Keratinocyte (primary cell): ENCODE measurements at regions of chr15 and their contacts with region 1.

Region 1: GRCh38 chr15:36932070-36932469 is 168.3 kb downstream of the MEIS2 start:
- DNase-seq: no peak
- H3K4me3 ChIP-seq: no peak overlapping the region
- H3K27ac ChIP-seq: no peak overlapping the region
- H3K4me1 ChIP-seq: no peaks in the 10 kb centered on the region
- H3K27me3 ChIP-seq: no peaks in the 10 kb centered on the region
- CTCF ChIP-seq: no peak

Region 2: DNA sequence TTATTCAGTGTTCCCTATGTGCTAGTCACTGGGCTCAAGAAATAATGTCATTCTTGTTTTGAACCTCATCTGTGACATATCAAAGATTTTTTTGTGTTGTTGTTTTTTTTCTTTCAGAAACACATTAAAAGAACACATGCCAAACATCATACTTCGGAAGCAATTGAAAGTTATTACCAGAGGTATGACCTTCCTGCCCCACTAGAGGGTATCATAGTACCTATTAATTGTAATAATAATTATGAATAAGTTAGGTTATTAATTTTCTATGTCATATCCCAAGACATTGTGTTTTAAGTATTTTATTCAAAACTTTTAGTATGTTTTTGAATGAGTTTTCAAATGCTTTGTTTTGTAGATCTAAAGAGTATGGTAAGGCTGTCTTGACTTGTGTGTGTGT is 287.0 kb before region 1 on chr15:
- dilution Hi-C with region 1: no loop called
- DNase-seq: no peak
- H3K4me3 ChIP-seq: no peak overlapping the region
- H3K27ac ChIP-seq: no peak overlapping the region
- H3K4me1 ChIP-seq: peaks cover 6% of the 10 kb centered on the region
- H3K27me3 ChIP-seq: no peaks in the 10 kb centered on the region
- CTCF ChIP-seq: peak in 1 of 3 experiments; percentile 12

Region 3: GRCh38 chr15:36707884-36708435 is 224.1 kb before region 1 on chr15:
- dilution Hi-C with region 1: no loop called
- DNase-seq: no peak
- H3K4me3 ChIP-seq: no peak overlapping the region
- H3K27ac ChIP-seq: no peak overlapping the region
- H3K4me1 ChIP-seq: no peaks in the 10 kb centered on the region
- H3K27me3 ChIP-seq: no peaks in the 10 kb centered on the region
- CTCF ChIP-seq: no peak

Region 4: GRCh38 chr15:36970522-36970921 is 38.5 kb after region 1 on chr15:
- dilution Hi-C with region 1: loop called (anchors 5 kb)
- DNase-seq: no peak
- H3K4me3 ChIP-seq: no peak overlapping the region
- H3K27ac ChIP-seq: no peak overlapping the region
- H3K4me1 ChIP-seq: no peaks in the 10 kb centered on the region
- H3K27me3 ChIP-seq: no peaks in the 10 kb centered on the region
- CTCF ChIP-seq: no peak

Region 5: DNA sequence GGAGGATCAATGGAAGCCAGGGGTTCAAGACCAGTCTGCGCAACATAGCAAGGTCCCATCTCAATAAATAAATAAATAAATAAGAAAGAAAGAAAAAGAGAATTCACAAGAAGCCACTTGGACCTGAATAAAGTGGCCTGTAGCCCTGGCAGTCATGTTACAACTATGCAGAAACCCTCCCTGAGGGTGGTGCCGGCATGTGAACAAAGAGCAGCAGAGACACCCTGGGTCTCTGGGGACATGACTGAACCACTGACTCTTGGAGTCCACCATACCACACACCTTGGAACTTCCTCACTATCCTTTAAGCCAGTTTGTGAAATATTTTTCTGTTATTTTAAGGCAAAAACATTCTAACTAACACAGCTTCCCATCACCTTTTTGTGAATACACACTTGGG is 75.2 kb after region 1 on chr15:
- dilution Hi-C with region 1: no loop called
- DNase-seq: no peak
- H3K4me3 ChIP-seq: no peak overlapping the region
- H3K27ac ChIP-seq: no peak overlapping the region
- H3K4me1 ChIP-seq: no peaks in the 10 kb centered on the region
- H3K27me3 ChIP-seq: no peaks in the 10 kb centered on the region
- CTCF ChIP-seq: no peak

Region 6: GRCh38 chr15:37045859-37046740 is 114.0 kb after region 1 on chr15:
- dilution Hi-C with region 1: no loop called
- DNase-seq: no peak
- H3K4me3 ChIP-seq: no peak overlapping the region
- H3K27ac ChIP-seq: no peak overlapping the region
- H3K4me1 ChIP-seq: peaks cover 5% of the 10 kb centered on the region
- H3K27me3 ChIP-seq: no peaks in the 10 kb centered on the region
- CTCF ChIP-seq: no peak